Dendritic cell treated with granulocyte-macrophage colony-stimulating factor and Interleukin-4, amounts not matched to agents 40 ng/mL and 50 ng/mL, for 4 days (primary cell): ENCODE measurements at regions of chr1 and their contacts with region 1.

Region 1: GRCh38 chr1:152141974-152142584 is 16.9 kb downstream of the RPTN start:
- H3K4me3 Mint-ChIP-seq: no peak overlapping the region
- H3K27ac Mint-ChIP-seq: no peak overlapping the region
- H3K4me1 Mint-ChIP-seq: peaks cover 19% of the 10 kb centered on the region
- H3K27me3 Mint-ChIP-seq: peaks cover 29% of the 10 kb centered on the region

Region 2: DNA sequence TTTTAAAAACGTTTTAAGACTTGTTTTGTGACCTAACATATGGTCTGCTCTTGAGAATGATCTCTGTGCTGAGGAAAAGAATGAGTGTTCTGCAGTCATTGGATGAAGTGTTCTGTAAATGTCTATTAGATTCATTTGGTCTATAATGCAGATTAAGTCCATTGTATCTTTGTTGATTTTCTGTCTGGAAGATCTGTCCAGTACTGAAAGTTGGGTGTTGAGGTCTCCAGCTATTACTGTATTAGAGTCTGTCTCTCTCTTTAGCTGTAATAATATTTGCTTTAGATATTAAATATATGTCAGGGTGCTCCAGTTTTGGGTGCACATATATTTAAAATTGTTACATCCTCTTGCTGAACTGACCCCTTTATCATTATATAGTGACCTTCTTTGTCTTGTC is 468.7 kb before region 1 on chr1:
- intact Hi-C with region 1: no loop called
- H3K4me3 Mint-ChIP-seq: no peak overlapping the region
- H3K27ac Mint-ChIP-seq: no peak overlapping the region
- H3K4me1 Mint-ChIP-seq: peaks cover 27% of the 10 kb centered on the region
- H3K27me3 Mint-ChIP-seq: no peaks in the 10 kb centered on the region

Region 3: DNA sequence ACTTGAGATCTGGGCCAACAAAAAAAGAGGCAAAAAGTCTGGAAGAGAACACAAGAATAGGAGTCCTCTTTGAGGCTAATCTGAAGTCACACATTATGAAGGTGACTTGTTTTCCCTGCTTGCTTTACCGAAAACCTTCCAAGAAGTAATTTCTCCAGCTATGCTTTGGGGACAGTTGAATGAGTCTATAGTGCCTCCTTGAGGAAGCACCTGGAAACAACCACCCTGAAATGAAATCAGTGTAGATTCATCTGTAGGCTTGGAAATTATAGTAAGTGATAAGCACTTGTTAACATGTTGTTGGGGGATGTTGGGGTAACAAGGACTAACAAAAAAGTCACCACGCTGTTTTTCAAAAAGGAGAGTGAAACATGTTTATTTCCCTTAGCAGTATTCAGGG is 40.4 kb after region 1 on chr1:
- intact Hi-C with region 1: loop called (anchors 1 kb)
- H3K4me3 Mint-ChIP-seq: no peak overlapping the region
- H3K27ac Mint-ChIP-seq: no peak overlapping the region
- H3K4me1 Mint-ChIP-seq: no peaks in the 10 kb centered on the region
- H3K27me3 Mint-ChIP-seq: peaks cover 7% of the 10 kb centered on the region